ENCODE measurements at regions of chr21 and their contacts with region 1.

Region 1: GRCh38 chr21:19011451-19011850 is 607.9 kb upstream of the TMPRSS15 start:
- DNase-seq: peak in 1 of 2 donors; percentile 15
- ATAC-seq: peak in 7 of 8 donors; percentile 38 to 91 (median 65)
- H3K4me3 ChIP-seq: no peak overlapping the region
- H3K27ac ChIP-seq: peak overlapping the region in 1 of 10 donors; percentile 15
- H3K4me1 ChIP-seq: peaks cover 0 to 13% (median 0%) of the 10 kb centered on the region in 9 donors
- H3K27me3 ChIP-seq: no peaks in the 10 kb centered on the region
- CTCF ChIP-seq: no peak

Region 2: GRCh38 chr21:18782721-18783120 is 228.7 kb before region 1 on chr21:
- intact Hi-C with region 1: no loop called
- DNase-seq: no peak
- ATAC-seq: no peak
- H3K4me3 ChIP-seq: no peak overlapping the region
- H3K27ac ChIP-seq: no peak overlapping the region
- H3K4me1 ChIP-seq: no peaks in the 10 kb centered on the region
- H3K27me3 ChIP-seq: no peaks in the 10 kb centered on the region
- CTCF ChIP-seq: no peak

Region 3: GRCh38 chr21:19256934-19257660 is 245.6 kb after region 1 on chr21:
- intact Hi-C with region 1: loop called in 1 of 10 experiments (anchors 10 kb)
- DNase-seq: peak in 1 of 2 donors; percentile 57
- ATAC-seq: peak; percentile 86 to 99 (median 96)
- H3K4me3 ChIP-seq: no peak overlapping the region
- H3K27ac ChIP-seq: peak overlapping the region in 4 of 10 donors; percentile 18 to 63 (median 56)
- H3K4me1 ChIP-seq: peaks cover 0 to 11% (median 0%) of the 10 kb centered on the region in 9 donors
- H3K27me3 ChIP-seq: no peaks in the 10 kb centered on the region
- CTCF ChIP-seq: no peak

Measured in heart right ventricle (tissue), 16 donors.